ENCODE measurements at regions of chr10 and their contacts with region 1.

Region 1: DNA sequence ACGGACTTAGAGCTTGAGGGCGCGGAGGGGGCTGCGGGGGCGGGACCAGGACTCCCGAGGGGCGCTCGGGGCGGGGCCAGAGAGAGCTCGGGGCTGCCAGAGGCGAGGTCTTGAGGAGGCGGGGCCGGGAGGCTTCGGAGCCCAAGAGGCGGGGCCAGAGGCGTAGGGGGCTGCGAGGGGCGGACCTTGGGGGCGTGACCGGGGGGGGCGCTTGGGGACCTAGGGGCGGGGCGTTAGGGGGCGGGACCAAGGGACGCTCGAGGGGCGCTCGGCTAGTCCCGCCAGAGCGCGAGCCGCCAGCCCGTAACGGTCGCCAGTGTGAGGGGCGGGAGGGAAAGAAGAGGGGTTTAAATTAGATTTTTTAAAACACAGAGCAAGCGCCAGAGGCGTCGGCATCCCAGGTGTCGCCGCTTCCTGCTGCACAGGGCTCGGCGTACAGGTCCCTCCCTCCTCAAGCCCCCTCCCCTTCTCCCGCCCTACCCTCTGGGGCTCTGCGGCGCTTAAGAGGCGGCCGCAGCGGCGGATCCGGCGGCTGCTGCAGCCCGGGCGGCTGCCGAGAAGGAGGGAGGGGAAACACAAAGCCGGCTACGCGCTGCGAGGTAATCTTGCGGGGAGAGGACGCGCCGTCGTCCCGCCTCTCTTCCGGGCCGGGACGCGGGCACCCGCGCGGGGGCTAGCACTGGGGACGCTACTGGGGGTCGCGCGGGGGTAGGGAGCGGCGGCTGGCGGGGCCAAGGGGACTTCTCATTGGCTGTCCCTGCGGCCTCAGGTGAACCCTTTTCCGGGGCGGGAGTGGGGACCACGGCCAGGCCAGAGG is at the start of gene ADD3:
- DNase-seq: peak; percentile 96 to 98
- ATAC-seq: peak; percentile 96
- H3K4me3 ChIP-seq: peak within 1 kb of the TSS; percentile 76 to 88
- H3K27ac ChIP-seq: peak within 1 kb of the TSS; percentile 50 to 96
- H3K4me1 ChIP-seq: peaks cover 0 to 6% of the 10 kb centered on the region in 2 donors
- H3K27me3 ChIP-seq: no peaks in the 10 kb centered on the region
- total RNA-seq, gene ADD3: 80.9 to 197 TPM

Region 2: DNA sequence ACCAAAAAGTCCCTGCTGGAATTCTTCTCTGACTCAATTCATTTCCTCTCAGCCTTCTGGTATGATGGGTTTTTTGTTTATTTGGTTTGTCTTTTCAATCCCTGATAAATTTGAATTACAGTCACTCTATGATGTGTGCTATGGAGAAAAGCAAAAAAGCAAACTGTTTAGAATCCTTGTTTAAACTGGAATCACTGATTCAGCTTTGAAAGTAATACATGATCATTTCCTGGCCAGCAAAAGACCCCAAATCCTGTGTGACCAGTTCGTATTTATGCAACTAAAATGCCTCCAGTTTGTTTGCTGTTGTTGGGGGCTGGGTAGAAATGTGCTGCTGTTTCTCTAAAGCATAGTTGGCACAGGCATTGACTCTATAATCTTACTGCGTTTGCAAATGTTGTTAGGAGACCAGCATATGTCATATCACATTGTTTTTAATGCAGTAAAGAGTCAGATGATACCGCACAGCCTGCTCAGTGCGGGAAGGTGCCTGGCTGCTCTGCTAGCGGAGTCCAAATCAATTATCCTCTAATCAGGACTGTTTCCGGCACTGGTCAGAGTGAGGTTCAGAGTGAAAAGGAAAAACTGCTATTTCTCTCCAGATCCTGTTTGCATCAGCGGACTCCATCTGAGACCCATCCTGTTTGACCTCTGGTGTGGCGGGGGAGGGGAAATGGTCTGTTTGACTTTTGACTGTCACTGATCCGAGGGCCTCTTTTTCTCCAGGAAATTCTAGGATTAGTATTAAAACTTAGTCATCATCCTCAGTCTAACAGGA is 40.8 kb before region 1 on chr10:
- intact Hi-C with region 1: loop called (anchors 5 kb)
- DNase-seq: no peak
- ATAC-seq: no peak
- H3K4me3 ChIP-seq: no peak overlapping the region
- H3K27ac ChIP-seq: peak overlapping the region in 1 of 2 donors; percentile 51
- H3K4me1 ChIP-seq: peaks cover 17 to 18% of the 10 kb centered on the region in 2 donors
- H3K27me3 ChIP-seq: no peaks in the 10 kb centered on the region

Measured in aorta (tissue), 5 donors.